A673 (cell line): ENCODE measurements at regions of chr5 and their contacts with region 1.

Region 1: GRCh38 chr5:53678981-53679645 is 118.7 kb downstream of the NDUFS4 start:
- DNase-seq: no peak
- H3K4me3 ChIP-seq: no peak overlapping the region
- H3K27ac ChIP-seq: no peak overlapping the region
- H3K4me1 ChIP-seq: no peaks in the 10 kb centered on the region
- H3K27me3 ChIP-seq: no peaks in the 10 kb centered on the region
- CTCF ChIP-seq: no peak

Region 2: DNA sequence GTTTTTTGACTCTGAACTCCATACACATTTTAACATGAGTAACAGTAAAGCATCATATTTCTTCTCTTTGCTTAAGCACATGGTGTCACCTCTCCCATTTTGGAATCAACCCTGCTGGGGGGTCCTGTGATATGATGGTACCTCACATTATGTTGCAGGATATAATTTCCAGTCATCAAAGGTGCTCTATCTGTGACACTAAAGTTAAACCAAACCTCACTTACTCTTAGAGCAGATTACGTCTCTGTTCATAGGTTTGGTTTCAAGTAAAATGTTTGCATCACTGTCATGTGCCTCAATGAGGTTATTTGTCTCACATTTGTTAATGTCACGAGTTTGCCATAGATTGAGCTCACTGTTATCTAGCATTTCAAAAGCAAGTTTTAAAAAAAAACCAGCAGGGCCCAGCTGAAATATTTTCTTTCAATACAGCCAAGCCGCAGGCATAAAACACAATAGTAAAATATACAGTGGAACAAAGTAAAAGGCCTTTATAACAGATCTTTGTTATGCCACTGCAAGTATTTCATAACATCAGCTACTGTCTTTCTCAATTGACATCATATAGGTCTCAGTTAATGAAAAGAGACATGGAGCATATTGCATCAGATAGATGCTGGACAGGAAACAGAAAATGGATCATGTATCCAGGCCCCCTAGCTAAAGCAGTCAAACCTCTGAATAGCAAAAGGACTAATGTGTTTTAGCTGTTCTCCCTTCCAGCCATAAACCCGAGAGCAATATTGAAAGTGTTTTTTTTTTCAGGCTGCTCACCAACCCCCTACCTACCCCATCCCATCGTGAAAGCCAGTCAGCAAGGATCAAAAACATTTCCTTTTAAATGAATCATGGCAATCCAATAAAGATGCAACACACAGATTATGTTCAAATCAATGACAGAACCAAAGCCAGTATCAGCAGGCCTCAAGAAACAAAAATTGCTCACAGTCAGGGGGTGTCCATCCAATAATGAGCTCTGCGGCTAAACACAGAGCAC is 1073.5 kb before region 1 on chr5:
- CTCF ChIA-PET with region 1: no interaction called
- POLR2A ChIA-PET with region 1: no interaction called
- intact Hi-C with region 1: no loop called
- DNase-seq: no peak
- H3K4me3 ChIP-seq: no peak overlapping the region
- H3K27ac ChIP-seq: no peak overlapping the region
- H3K4me1 ChIP-seq: no peaks in the 10 kb centered on the region
- H3K27me3 ChIP-seq: no peaks in the 10 kb centered on the region
- CTCF ChIP-seq: no peak

Region 3: GRCh38 chr5:53714322-53714941 is 35.3 kb after region 1 on chr5:
- CTCF ChIA-PET with region 1: interaction called, 10 read pairs
- POLR2A ChIA-PET with region 1: no interaction called
- intact Hi-C with region 1: no loop called
- DNase-seq: no peak
- H3K4me3 ChIP-seq: no peak overlapping the region
- H3K27ac ChIP-seq: no peak overlapping the region
- H3K4me1 ChIP-seq: no peaks in the 10 kb centered on the region
- H3K27me3 ChIP-seq: no peaks in the 10 kb centered on the region
- CTCF ChIP-seq: no peak